Head of caudate nucleus (tissue), 42 donors: ENCODE measurements at regions of chr6 and their contacts with region 1.

Region 1: GRCh38 chr6:42075159-42075838 is 25.0 kb downstream of the TAF8 start:
- DNase-seq: peak; percentile 52 to 89 (median 79)

Region 2: DNA sequence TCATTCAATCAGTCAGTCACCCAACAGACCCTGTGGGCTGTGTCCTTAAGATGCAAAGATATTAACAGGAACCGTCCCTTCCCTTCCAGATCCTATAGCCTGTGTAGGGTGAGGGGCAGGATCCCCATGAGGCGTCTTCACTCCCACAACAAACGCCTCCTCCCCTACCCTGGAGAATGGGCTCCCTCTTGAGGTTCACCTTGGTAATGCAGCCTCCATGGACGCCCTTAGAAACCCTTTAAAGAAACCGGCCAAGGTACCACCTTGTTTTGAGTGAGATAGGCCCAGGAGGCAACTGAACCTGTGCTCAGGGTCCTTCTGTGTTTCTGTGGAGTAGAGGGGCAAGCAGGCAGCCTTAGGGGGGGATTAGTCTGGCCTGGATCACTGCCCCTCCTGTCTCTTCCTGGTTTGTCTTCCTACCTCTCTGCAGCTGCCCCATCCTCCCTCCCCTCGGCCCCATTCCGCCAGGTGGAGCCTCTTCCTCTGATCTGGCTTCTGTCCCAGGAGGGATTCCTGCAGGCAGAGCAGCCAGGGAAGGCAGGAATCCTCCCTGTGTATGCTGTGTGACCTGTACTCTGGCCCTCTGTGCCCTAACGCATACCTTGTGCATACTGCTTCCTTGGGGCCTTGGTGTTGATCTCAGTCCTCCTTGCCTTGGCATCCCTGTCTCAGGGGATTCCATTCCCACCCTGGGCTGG is 91.3 kb after region 1 on chr6:
- intact Hi-C with region 1: loop called (anchors 5 kb)
- DNase-seq: peak in 40 of 42 donors; percentile 13 to 88 (median 68)